Naive thymus-derived CD8-positive, alpha-beta T cell (primary cell): ENCODE measurements at regions of chr9 and their contacts with region 1.

Region 1: GRCh38 chr9:127817881-127818434 is 15.3 kb downstream of the FPGS start:
- DNase-seq: no peak
- ATAC-seq: no peak
- H3K4me3 Mint-ChIP-seq: no peak overlapping the region
- H3K27ac Mint-ChIP-seq: peak overlapping the region in 5 of 10 donors; percentile 56 to 84 (median 65)
- H3K4me1 Mint-ChIP-seq: peaks cover 0 to 3% (median under 1%) of the 10 kb centered on the region in 4 donors
- H3K27me3 Mint-ChIP-seq: no peaks in the 10 kb centered on the region

Region 2: GRCh38 chr9:127828262-127829031 is 10.5 kb after region 1 on chr9:
- POLR2A ChIA-PET with region 1: interaction called, 14 read pairs
- DNase-seq: no peak
- ATAC-seq: no peak
- H3K4me3 Mint-ChIP-seq: no peak overlapping the region
- H3K27ac Mint-ChIP-seq: peak overlapping the region in 7 of 10 donors; percentile 36 to 82 (median 66)
- H3K4me1 Mint-ChIP-seq: peaks cover 4 to 16% (median 11%) of the 10 kb centered on the region in 4 donors
- H3K27me3 Mint-ChIP-seq: no peaks in the 10 kb centered on the region

Region 3: GRCh38 chr9:127867356-127868287 is 49.7 kb after region 1 on chr9:
- POLR2A ChIA-PET with region 1: no interaction called
- DNase-seq: no peak
- ATAC-seq: no peak
- H3K4me3 Mint-ChIP-seq: no peak overlapping the region
- H3K27ac Mint-ChIP-seq: peak overlapping the region in 4 of 10 donors; percentile 35 to 70 (median 48)
- H3K4me1 Mint-ChIP-seq: peaks cover 19 to 32% (median 23%) of the 10 kb centered on the region in 4 donors
- H3K27me3 Mint-ChIP-seq: no peaks in the 10 kb centered on the region